Posterior vena cava (tissue), 2 donors: ENCODE measurements at regions of chr13 and their contacts with region 1.

Region 1: DNA sequence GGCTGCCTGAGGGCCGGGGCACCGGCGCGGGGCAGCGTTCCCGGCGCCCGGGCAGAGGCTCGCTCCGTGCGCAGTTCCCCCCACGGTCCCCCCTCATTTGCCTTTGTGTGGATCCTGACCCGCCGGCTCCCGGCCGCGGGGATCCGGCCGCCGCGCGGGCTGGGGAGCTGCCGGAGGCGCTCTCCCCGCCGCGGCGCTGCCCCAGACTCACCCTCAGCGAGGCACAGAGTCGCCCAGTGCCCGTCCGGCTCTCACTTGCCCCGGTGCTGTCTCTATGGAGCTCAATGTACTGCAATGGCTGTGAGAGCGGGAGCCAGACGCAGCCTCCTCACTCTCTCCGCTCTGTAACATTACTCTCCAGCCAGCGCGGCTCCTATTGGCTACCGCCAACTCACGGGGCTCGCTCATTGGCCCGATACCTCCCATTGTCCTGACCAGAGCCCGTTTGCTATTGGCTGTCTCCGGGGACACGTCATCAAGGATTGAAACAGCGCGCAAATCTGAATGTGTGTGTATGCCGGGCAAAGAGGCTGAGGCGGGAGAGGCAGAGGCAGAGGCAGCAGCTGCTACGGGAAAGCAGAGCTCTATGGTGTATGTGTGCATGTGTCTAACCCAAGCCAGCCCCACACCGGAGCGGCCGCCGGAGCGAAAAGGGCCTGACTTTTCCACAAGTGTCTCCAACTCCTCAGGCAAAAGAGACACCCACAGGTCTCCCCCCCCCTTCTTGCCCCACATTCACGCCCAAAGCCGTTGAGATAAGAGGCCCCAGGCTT is at the start of gene HMGB1:
- DNase-seq: peak; percentile 99
- total RNA-seq, gene HMGB1: 241 to 254 TPM

Region 2: GRCh38 chr13:29522044-29522685 is 943.6 kb before region 1 on chr13:
- intact Hi-C with region 1: no loop called
- DNase-seq: peak; percentile 79

Region 3: GRCh38 chr13:30132623-30133553 is 332.9 kb before region 1 on chr13:
- intact Hi-C with region 1: loop called in 1 of 2 experiments (anchors 5 kb)
- DNase-seq: peak; percentile 99

Region 4: GRCh38 chr13:30204564-30204963 is 261.2 kb before region 1 on chr13:
- intact Hi-C with region 1: no loop called
- DNase-seq: no peak

Region 5: DNA sequence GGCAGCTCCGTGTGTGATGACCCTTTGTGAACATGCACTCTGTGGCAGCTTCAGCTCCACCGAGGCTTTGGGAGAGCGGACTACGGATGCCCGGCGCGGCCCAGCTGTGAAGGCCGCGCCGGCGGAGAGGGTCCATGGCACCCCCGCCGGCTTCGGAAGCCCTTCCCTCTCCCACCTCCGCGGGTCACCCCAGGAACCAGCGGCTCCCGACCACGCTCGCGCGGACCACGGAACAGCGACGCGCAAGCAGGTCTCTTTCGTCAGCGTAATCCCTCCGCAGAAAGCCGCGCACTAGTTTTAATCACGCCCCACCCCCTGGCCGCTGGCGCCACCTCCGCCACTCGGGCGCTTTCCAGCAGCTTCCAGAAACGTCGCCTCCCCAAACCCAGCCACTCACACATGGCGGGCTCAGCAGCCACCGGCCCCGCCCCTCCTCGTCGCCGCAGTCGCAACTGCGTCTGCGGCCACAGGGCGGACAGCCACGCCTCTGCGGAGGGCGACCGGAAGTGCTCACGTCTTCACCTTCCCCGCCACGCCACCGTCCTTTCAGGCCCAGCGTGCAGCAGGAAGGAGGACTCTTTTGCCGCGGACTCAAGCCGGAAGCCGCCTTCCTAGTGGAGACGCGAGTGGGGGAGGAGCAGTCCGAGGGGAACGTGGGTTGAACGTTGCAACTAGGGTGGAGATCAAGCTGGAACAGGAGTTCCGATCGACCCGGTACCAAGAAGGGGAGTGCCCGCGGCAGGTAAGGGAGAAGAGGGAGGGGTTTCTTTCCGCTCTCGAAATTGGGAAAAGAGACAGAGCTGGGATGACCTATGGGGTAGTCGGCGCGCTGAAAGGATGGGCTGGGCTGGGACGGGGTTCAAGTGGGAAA is 151.8 kb after region 1 on chr13 and contains the start of gene USPL1:
- intact Hi-C with region 1: loop called in 1 of 2 experiments (anchors 2 kb)
- DNase-seq: peak; percentile 99
- total RNA-seq, gene USPL1: 13.8 to 14.2 TPM